ENCODE measurements at regions of chr20 and their contacts with region 1.

Region 1: DNA sequence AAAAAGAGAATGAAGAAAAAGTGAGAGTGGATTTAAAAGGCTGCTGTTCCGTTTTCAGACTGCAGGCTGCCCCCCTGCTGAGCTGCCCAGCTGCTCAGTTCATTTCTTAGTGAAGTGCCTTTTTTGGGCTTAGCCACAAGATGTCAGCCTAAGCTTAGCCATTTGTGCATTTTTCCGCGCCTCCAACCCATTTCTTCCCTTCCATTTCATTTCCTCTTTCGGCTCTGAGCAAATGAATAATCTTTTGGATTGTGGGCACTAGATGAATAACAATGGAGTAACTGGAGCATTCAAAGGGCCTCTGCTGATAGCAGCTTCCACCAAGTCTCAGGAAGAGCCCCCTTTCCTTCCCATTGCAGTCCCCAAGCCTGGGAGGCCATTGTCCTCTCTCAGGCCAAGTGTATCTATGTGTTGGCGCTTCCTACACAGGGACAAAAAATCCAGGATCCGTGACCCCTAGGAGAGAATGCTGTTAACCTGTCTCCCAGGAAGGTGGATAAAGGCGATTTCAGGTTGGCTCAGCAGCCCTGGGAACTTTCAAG is 83.5 kb upstream of the SPTLC3 start:
- DNase-seq: peak; percentile 92
- ATAC-seq: peak; percentile 27
- H3K4me3 ChIP-seq: no peak overlapping the region
- H3K27ac ChIP-seq: no peak overlapping the region
- H3K4me1 ChIP-seq: peaks cover 49% of the 10 kb centered on the region
- H3K27me3 ChIP-seq: no peaks in the 10 kb centered on the region
- CTCF ChIP-seq: peak; percentile 99

Region 2: GRCh38 chr20:12528591-12529041 is 396.7 kb before region 1 on chr20:
- CTCF ChIA-PET with region 1: no interaction called
- POLR2A ChIA-PET with region 1: no interaction called
- intact Hi-C with region 1: no loop called
- DNase-seq: no peak
- ATAC-seq: no peak
- H3K4me3 ChIP-seq: no peak overlapping the region
- H3K27ac ChIP-seq: no peak overlapping the region
- H3K4me1 ChIP-seq: no peaks in the 10 kb centered on the region
- H3K27me3 ChIP-seq: peaks cover 53% of the 10 kb centered on the region
- CTCF ChIP-seq: no peak

Region 3: DNA sequence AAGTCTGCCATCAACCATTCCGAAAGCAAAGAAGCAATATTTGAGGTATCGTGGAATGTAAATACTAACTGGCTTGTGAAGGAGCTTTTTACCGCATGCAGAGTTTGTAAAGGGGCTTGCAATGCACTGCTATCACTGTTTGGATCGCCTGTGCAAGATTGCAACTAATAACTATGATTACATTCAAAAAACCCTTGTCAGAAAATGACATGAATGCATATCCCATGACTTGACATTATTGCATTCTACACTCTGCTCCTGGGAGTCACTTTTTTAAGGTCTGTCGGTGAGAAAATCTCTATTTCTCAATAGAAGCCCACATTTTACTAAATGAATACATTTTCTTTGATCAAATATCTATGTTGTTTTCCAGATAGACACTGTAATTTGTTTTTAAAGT is 251.9 kb before region 1 on chr20:
- CTCF ChIA-PET with region 1: no interaction called
- POLR2A ChIA-PET with region 1: no interaction called
- intact Hi-C with region 1: no loop called
- DNase-seq: no peak
- ATAC-seq: no peak
- H3K4me3 ChIP-seq: no peak overlapping the region
- H3K27ac ChIP-seq: no peak overlapping the region
- H3K4me1 ChIP-seq: no peaks in the 10 kb centered on the region
- H3K27me3 ChIP-seq: peaks cover 63% of the 10 kb centered on the region
- CTCF ChIP-seq: no peak

Region 4: DNA sequence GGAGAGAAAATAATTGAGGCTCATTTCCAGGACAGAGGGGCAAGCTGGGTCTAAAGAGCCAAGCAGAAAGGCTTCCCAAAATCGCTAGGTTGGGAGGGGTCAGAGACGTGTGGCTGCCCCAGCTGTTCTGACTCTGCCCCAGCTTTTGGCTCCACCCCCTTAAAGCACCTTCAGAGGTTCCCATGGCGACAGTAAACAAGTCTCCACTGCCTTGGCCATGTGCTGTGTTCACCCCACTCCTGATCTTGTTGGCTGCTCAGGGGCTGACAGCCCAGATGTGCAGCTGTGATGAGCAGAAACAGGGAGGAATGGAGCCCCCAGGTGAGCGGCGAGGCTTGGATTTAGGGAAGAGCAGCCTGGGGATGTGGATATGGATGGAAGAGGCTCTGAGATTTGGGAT is 10.8 kb after region 1 on chr20:
- CTCF ChIA-PET with region 1: no interaction called
- POLR2A ChIA-PET with region 1: no interaction called
- intact Hi-C with region 1: loop called (anchors 1 kb)
- DNase-seq: peak; percentile 51
- ATAC-seq: peak; percentile 52
- H3K4me3 ChIP-seq: 0 out of 2 replicates have a peak overlapping the region, but pooled peaks have one; percentile 30
- H3K27ac ChIP-seq: peak overlapping the region; percentile 92
- H3K4me1 ChIP-seq: peaks cover 47% of the 10 kb centered on the region
- H3K27me3 ChIP-seq: no peaks in the 10 kb centered on the region
- CTCF ChIP-seq: no peak

Region 5: GRCh38 chr20:12970372-12970821 is 45.1 kb after region 1 on chr20:
- CTCF ChIA-PET with region 1: interaction called, 25 read pairs
- POLR2A ChIA-PET with region 1: interaction called, 4 read pairs
- intact Hi-C with region 1: loop called (anchors 1 kb)
- DNase-seq: peak; percentile 84
- ATAC-seq: peak; percentile 17
- H3K4me3 ChIP-seq: no peak overlapping the region
- H3K27ac ChIP-seq: no peak overlapping the region
- H3K4me1 ChIP-seq: peaks cover 34% of the 10 kb centered on the region
- H3K27me3 ChIP-seq: no peaks in the 10 kb centered on the region
- CTCF ChIP-seq: peak; percentile 88

Region 6: GRCh38 chr20:13105864-13106457 is 180.7 kb after region 1 on chr20:
- CTCF ChIA-PET with region 1: no interaction called
- POLR2A ChIA-PET with region 1: no interaction called
- intact Hi-C with region 1: loop called (anchors 1 kb)
- DNase-seq: peak; percentile 84
- ATAC-seq: peak; percentile 23; the same call in 1 of the 2 replicates
- H3K4me3 ChIP-seq: no peak overlapping the region
- H3K27ac ChIP-seq: no peak overlapping the region
- H3K4me1 ChIP-seq: peaks cover 17% of the 10 kb centered on the region
- H3K27me3 ChIP-seq: no peaks in the 10 kb centered on the region
- CTCF ChIP-seq: peak; percentile 89

Region 7: DNA sequence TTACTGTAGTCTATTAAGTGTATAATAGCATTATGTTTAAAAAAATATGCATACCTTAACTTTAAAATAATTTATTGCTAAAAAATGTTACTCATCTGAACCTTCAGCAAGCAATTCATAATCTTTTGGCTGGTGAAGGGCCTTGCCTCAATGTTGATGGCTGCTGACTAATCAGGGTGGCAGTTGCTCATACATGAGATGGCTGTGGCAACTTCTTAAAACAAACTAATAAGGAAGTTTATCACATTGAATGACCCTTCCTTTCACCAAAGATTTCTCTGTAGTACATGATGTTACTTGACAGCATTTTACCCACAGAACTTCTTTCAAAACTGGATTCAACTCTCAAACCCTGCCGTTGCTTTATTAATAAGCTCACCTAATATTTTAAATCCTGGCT is 629.4 kb after region 1 on chr20:
- CTCF ChIA-PET with region 1: no interaction called
- POLR2A ChIA-PET with region 1: no interaction called
- intact Hi-C with region 1: loop called (anchors 5 kb)
- DNase-seq: peak; percentile 91
- ATAC-seq: peak; percentile 84
- H3K4me3 ChIP-seq: no peak overlapping the region
- H3K27ac ChIP-seq: peak overlapping the region; percentile 77
- H3K4me1 ChIP-seq: peaks cover 42% of the 10 kb centered on the region
- H3K27me3 ChIP-seq: no peaks in the 10 kb centered on the region
- CTCF ChIP-seq: no peak

Measured in PC-3 (cell line).